ENCODE measurements at regions of chr16 and their contacts with region 1.

Region 1: GRCh38 chr16:67935402-67936123 is 1.1 kb downstream of the PSMB10 start:
- DNase-seq: peak; percentile 71 to 95 (median 91)
- ATAC-seq: peak; percentile 96
- H3K4me3 ChIP-seq: peak overlapping the region; percentile 99
- H3K4me3 Mint-ChIP-seq: peak overlapping the region; percentile 89 to 100 (median 100)
- H3K27ac ChIP-seq: peak overlapping the region; percentile 77
- H3K27ac Mint-ChIP-seq: peak overlapping the region; percentile 87 to 99 (median 99)
- H3K4me1 ChIP-seq: peaks cover 21 to 32% of the 10 kb centered on the region in 2 donors
- H3K4me1 Mint-ChIP-seq: peaks cover 28 to 48% (median 35%) of the 10 kb centered on the region in 7 donors
- H3K27me3 ChIP-seq: no peaks in the 10 kb centered on the region
- H3K27me3 Mint-ChIP-seq: peaks cover 0 to 3% (median 0%) of the 10 kb centered on the region in 5 donors

Region 2: DNA sequence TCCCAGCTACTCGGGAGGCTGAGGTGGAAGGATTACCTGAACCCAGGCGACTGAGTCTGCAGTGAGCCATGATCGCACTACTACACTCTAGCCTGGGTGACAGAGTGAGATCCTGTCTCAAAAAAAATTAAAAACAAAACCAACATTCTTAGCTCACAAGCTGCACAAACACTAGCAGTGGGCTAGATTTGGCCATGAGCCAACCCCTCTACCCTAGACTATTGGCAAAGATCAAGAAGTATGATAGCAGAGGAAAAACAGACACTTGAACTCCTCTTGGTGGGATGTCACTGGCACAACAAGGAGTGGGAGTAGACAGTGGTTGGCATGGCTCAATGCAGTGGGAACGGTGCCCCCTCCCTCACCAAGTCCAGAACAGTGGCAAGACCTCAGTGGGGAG is 426.5 kb before region 1 on chr16:
- CTCF ChIA-PET with region 1: no interaction called
- POLR2A ChIA-PET with region 1: no interaction called
- intact Hi-C with region 1: no loop called
- DNase-seq: peak in 6 of 9 donors; percentile 27 to 56 (median 40)
- ATAC-seq: no peak
- H3K4me3 ChIP-seq: no peak overlapping the region
- H3K4me3 Mint-ChIP-seq: peak overlapping the region in 5 of 10 donors; percentile 32 to 76 (median 56)
- H3K27ac ChIP-seq: no peak overlapping the region
- H3K27ac Mint-ChIP-seq: peak overlapping the region in 7 of 9 donors; percentile 35 to 76 (median 66)
- H3K4me1 ChIP-seq: peaks cover 27 to 34% of the 10 kb centered on the region in 2 donors
- H3K4me1 Mint-ChIP-seq: peaks cover 23 to 54% (median 50%) of the 10 kb centered on the region in 7 donors
- H3K27me3 ChIP-seq: no peaks in the 10 kb centered on the region
- H3K27me3 Mint-ChIP-seq: no peaks in the 10 kb centered on the region

Region 3: GRCh38 chr16:67561824-67562525 is 373.6 kb before region 1 on chr16:
- CTCF ChIA-PET with region 1: no interaction called
- POLR2A ChIA-PET with region 1: interaction called, 3 read pairs
- intact Hi-C with region 1: loop called (anchors 1 to 5 kb)
- DNase-seq: peak; percentile 93 to 98 (median 96)
- ATAC-seq: peak; percentile 86
- H3K4me3 ChIP-seq: peak overlapping the region; percentile 72
- H3K4me3 Mint-ChIP-seq: peak overlapping the region; percentile 85 to 93 (median 90)
- H3K27ac ChIP-seq: peak overlapping the region; percentile 98
- H3K27ac Mint-ChIP-seq: peak overlapping the region; percentile 90 to 99 (median 96)
- H3K4me1 ChIP-seq: peaks cover 30 to 36% of the 10 kb centered on the region in 2 donors
- H3K4me1 Mint-ChIP-seq: peaks cover 28 to 64% (median 46%) of the 10 kb centered on the region in 7 donors
- H3K27me3 ChIP-seq: no peaks in the 10 kb centered on the region
- H3K27me3 Mint-ChIP-seq: no peaks in the 10 kb centered on the region

Region 4: DNA sequence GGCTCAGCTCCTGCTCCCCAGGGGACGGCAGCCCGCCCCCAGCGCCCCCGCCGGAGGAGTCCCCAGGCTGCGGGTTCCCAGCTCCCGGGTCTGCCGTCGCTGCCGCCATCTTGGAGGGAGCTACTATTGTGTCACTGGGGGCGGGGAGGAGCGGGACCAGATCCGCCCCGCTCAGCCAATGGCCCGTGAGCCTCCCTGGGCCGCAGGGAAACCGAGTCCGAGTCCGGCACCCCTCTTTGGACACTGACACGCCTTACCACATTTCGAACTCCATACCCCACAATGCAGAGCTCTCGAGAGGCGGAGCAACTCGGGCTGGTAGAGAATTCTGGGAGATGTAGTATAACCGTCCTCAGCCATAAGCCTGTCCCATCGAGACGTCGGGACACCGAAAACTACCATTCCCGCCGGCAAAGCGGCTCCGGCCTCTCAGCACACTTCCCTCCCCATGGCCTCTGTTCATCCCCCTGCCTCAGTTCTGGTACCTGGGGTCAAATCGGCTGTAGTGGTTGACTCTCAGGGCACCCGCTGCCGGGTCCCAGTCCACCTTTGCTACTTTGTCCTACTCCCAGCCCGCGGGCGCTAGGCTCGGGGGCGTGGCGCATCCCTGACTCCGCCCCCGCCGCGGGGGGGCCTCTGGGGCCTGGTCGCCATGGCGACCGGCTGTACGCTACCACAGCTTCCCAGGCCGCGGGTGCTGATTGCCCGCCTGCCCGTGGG is 129.0 kb before region 1 on chr16 and contains the starts of genes RANBP10 and TSNAXIP1:
- CTCF ChIA-PET with region 1: no interaction called
- POLR2A ChIA-PET with region 1: interaction called, 15 read pairs
- intact Hi-C with region 1: loop called (anchors 1 kb)
- DNase-seq: peak; percentile 91 to 99 (median 97)
- ATAC-seq: peak; percentile 96
- H3K4me3 ChIP-seq: peak within 1 kb of the TSS; percentile 88
- H3K4me3 Mint-ChIP-seq: peak within 1 kb of the TSS; percentile 75 to 97 (median 94)
- H3K27ac ChIP-seq: peak within 1 kb of the TSS; percentile 89
- H3K27ac Mint-ChIP-seq: peak within 1 kb of the TSS; percentile 74 to 97 (median 95)
- H3K4me1 ChIP-seq: peaks cover 29 to 43% of the 10 kb centered on the region in 2 donors
- H3K4me1 Mint-ChIP-seq: peaks cover 13 to 49% (median 42%) of the 10 kb centered on the region in 7 donors
- H3K27me3 ChIP-seq: no peaks in the 10 kb centered on the region
- H3K27me3 Mint-ChIP-seq: peaks cover 0 to under 1% (median 0%) of the 10 kb centered on the region in 5 donors
- total RNA-seq, gene RANBP10: 22.3 to 26.6 (median 24.7) TPM
- total RNA-seq, gene TSNAXIP1: 0.24 to 1.1 (median 0.54) TPM

Region 5: GRCh38 chr16:67883872-67884261 is 51.7 kb before region 1 on chr16:
- CTCF ChIA-PET with region 1: interaction called, 14 read pairs
- POLR2A ChIA-PET with region 1: interaction called, 4 read pairs
- intact Hi-C with region 1: no loop called
- DNase-seq: peak; percentile 62 to 83 (median 74)
- ATAC-seq: peak; percentile 84
- H3K4me3 ChIP-seq: no peak overlapping the region
- H3K4me3 Mint-ChIP-seq: no peak overlapping the region
- H3K27ac ChIP-seq: no peak overlapping the region
- H3K27ac Mint-ChIP-seq: peak overlapping the region in 4 of 9 donors; percentile 19 to 42 (median 36)
- H3K4me1 ChIP-seq: no peaks in the 10 kb centered on the region
- H3K4me1 Mint-ChIP-seq: peaks cover 0 to 6% (median 0%) of the 10 kb centered on the region in 7 donors
- H3K27me3 ChIP-seq: no peaks in the 10 kb centered on the region
- H3K27me3 Mint-ChIP-seq: no peaks in the 10 kb centered on the region

Region 6: DNA sequence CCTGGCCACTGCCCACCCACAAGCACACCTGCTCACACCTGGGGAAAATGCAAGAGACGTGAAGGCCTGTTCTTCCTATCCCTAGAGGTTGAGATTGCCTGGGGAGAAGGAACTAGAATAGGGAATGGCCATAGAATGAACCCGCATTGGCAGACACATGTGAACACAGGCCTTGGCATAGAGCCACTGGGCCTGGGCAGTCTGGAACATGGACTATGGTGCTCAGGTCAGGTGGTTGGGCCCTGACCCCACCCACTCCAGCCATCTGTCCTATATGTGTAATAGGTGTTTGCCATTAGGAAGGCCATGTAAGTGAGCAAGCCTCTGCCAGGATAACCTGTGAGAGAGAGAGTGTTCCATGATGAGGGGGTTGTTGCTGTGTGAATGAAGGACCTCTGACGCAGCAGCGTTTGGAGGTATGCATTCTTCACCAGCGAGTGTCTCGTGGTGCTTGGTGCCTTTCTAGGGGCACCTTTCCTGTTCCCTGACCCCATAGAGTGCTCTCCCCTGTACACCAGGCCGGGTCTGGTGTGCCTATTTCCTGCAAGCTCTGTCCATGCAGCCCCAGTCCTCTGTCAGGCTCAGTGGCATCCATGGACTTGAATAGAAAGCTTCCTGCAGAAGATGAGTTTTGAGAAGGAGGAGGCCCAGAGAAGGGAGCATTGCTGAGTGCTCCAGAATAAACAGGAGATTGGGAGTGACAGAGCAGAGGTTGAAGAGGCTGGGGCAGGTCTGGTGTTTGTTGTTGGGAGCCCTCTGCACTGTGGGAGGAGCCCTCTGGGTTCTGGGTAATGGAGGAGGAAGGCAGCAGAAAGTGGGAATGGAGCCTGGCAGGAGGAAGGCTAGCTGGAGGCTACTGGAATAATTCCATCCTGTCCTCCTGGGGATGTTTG is 19.5 kb before region 1 on chr16:
- CTCF ChIA-PET with region 1: no interaction called
- POLR2A ChIA-PET with region 1: no interaction called
- intact Hi-C with region 1: no loop called
- DNase-seq: no peak
- ATAC-seq: no peak
- H3K4me3 ChIP-seq: no peak overlapping the region
- H3K4me3 Mint-ChIP-seq: no peak overlapping the region
- H3K27ac ChIP-seq: no peak overlapping the region
- H3K27ac Mint-ChIP-seq: peak overlapping the region in 3 of 9 donors; percentile 45 to 72 (median 64)
- H3K4me1 ChIP-seq: no peaks in the 10 kb centered on the region
- H3K4me1 Mint-ChIP-seq: peaks cover 23 to 40% (median 32%) of the 10 kb centered on the region in 7 donors
- H3K27me3 ChIP-seq: no peaks in the 10 kb centered on the region
- H3K27me3 Mint-ChIP-seq: no peaks in the 10 kb centered on the region

Region 7: DNA sequence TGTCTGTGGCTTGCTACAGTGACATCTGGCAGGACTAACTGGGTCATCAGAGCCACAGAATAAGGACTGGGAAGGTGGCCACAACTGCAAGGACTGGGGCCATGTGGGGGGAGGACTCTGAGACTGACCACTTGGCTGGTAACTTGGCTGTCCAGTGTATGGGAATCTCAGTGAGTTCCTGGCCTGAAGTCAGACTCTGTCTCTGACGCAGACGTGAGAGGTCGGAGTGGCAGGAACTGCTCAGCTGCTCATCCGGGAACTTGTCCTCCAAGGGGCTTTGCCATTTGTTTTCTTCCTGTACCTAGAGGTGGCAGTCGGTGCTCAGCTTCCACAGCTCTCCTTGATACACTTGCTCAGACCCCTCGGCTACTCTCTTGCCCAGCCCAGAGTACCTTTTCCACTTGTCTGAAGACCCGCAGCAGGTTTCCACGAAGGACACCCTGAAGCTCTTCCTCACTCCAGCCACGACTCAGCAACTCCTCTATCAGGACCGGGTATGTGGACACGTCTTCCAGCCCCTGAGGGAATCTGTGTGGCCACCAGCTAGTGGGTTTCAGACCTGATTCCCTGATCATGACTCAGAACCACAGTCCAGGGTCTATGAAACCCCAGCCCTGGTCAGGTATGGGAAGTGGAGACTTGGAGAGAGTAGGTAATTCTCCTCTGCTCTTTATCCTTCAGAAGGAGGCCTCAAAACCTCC is 52.0 kb after region 1 on chr16:
- CTCF ChIA-PET with region 1: interaction called, 4 read pairs
- POLR2A ChIA-PET with region 1: interaction called, 29 read pairs
- intact Hi-C with region 1: loop called in 1 of 2 experiments (anchors 1 kb)
- DNase-seq: no peak
- ATAC-seq: no peak
- H3K4me3 ChIP-seq: no peak overlapping the region
- H3K4me3 Mint-ChIP-seq: no peak overlapping the region
- H3K27ac ChIP-seq: peak overlapping the region; percentile 39
- H3K27ac Mint-ChIP-seq: peak overlapping the region in 8 of 9 donors; percentile 70 to 91 (median 85)
- H3K4me1 ChIP-seq: peaks cover 9 to 30% of the 10 kb centered on the region in 2 donors
- H3K4me1 Mint-ChIP-seq: peaks cover 27 to 45% (median 32%) of the 10 kb centered on the region in 7 donors
- H3K27me3 ChIP-seq: no peaks in the 10 kb centered on the region
- H3K27me3 Mint-ChIP-seq: no peaks in the 10 kb centered on the region

Region 8: DNA sequence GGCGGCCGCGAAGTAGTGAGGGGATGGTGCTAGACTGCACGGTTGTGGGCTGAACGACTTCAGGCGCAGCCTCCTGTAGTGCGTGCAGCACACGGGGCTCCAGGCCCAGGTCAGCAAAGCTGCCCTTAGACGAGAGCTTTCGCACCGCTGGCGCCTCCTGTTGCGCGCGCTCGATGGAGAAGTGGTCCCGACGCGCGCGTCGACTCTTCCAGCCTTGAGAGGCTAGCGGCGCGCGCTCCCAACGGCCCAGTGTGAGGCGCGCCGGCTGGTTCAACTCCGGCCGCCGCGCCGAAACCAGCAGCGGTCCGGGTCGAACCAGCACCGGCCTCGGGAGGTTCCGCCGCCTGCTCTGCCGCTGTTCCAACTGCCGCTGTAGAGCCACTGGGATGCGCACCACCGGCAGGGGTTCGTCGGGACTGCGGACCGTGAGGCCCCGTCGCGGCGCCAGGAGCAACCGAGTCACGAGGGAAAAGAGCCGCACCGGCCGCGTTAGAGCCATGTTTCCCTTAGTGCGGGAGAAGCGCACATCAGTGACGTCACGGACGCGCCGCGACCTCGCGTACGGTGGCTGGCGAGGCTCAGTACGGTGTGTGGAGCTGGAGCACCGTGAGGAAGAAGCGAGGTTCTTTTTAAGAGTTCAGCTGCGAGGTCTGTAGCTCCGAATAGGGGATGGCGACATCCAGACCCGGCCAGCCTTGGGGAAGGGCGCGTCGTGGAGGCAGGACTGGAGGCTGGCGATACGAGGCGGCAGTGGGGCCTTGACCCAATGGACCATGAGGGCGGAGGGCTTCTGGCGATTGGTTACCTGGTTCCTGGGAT is 87.3 kb after region 1 on chr16 and contains the starts of genes DDX28 and DUS2:
- CTCF ChIA-PET with region 1: no interaction called
- POLR2A ChIA-PET with region 1: interaction called, 6 read pairs
- intact Hi-C with region 1: loop called in 1 of 2 experiments (anchors 1 kb)
- DNase-seq: peak; percentile 89 to 98 (median 94)
- ATAC-seq: peak; percentile 98
- H3K4me3 ChIP-seq: peak within 1 kb of the TSS; percentile 67
- H3K4me3 Mint-ChIP-seq: peak within 1 kb of the TSS; percentile 88 to 100 (median 98)
- H3K27ac ChIP-seq: peak within 1 kb of the TSS; percentile 92
- H3K27ac Mint-ChIP-seq: peak within 1 kb of the TSS; percentile 94 to 100 (median 96)
- H3K4me1 ChIP-seq: peaks cover 16 to 22% of the 10 kb centered on the region in 2 donors
- H3K4me1 Mint-ChIP-seq: peaks cover 13 to 42% (median 30%) of the 10 kb centered on the region in 7 donors
- H3K27me3 ChIP-seq: no peaks in the 10 kb centered on the region
- H3K27me3 Mint-ChIP-seq: peaks cover 0 to 2% (median 0%) of the 10 kb centered on the region in 5 donors
- total RNA-seq, gene DDX28: 15.5 to 19.9 (median 19.1) TPM
- total RNA-seq, gene DUS2: 13.6 to 25.9 (median 18.3) TPM

Region 9: GRCh38 chr16:68237243-68238028 is 301.9 kb after region 1 on chr16:
- CTCF ChIA-PET with region 1: no interaction called
- POLR2A ChIA-PET with region 1: interaction called, 6 read pairs
- intact Hi-C with region 1: loop called (anchors 1 to 5 kb)
- DNase-seq: peak; percentile 71 to 90 (median 83)
- ATAC-seq: peak; percentile 88
- H3K4me3 ChIP-seq: peak overlapping the region; percentile 91
- H3K4me3 Mint-ChIP-seq: peak overlapping the region; percentile 90 to 99 (median 96)
- H3K27ac ChIP-seq: peak overlapping the region; percentile 67
- H3K27ac Mint-ChIP-seq: peak overlapping the region; percentile 72 to 95 (median 87)
- H3K4me1 ChIP-seq: peaks cover 6 to 10% of the 10 kb centered on the region in 2 donors
- H3K4me1 Mint-ChIP-seq: peaks cover 23 to 45% (median 34%) of the 10 kb centered on the region in 7 donors
- H3K27me3 ChIP-seq: no peaks in the 10 kb centered on the region
- H3K27me3 Mint-ChIP-seq: peaks cover 0 to 13% (median 0%) of the 10 kb centered on the region in 5 donors

Region 10: GRCh38 chr16:68328151-68328859 is 392.7 kb after region 1 on chr16:
- CTCF ChIA-PET with region 1: no interaction called
- POLR2A ChIA-PET with region 1: no interaction called
- intact Hi-C with region 1: no loop called
- DNase-seq: peak; percentile 52 to 81 (median 77)
- ATAC-seq: peak; percentile 99
- H3K4me3 ChIP-seq: no peak overlapping the region
- H3K4me3 Mint-ChIP-seq: no peak overlapping the region
- H3K27ac ChIP-seq: no peak overlapping the region
- H3K27ac Mint-ChIP-seq: peak overlapping the region in 4 of 9 donors; percentile 0 to 57 (median 9)
- H3K4me1 ChIP-seq: peaks cover 0 to 16% of the 10 kb centered on the region in 2 donors
- H3K4me1 Mint-ChIP-seq: peaks cover 16 to 28% (median 19%) of the 10 kb centered on the region in 7 donors
- H3K27me3 ChIP-seq: no peaks in the 10 kb centered on the region
- H3K27me3 Mint-ChIP-seq: no peaks in the 10 kb centered on the region

Region 11: DNA sequence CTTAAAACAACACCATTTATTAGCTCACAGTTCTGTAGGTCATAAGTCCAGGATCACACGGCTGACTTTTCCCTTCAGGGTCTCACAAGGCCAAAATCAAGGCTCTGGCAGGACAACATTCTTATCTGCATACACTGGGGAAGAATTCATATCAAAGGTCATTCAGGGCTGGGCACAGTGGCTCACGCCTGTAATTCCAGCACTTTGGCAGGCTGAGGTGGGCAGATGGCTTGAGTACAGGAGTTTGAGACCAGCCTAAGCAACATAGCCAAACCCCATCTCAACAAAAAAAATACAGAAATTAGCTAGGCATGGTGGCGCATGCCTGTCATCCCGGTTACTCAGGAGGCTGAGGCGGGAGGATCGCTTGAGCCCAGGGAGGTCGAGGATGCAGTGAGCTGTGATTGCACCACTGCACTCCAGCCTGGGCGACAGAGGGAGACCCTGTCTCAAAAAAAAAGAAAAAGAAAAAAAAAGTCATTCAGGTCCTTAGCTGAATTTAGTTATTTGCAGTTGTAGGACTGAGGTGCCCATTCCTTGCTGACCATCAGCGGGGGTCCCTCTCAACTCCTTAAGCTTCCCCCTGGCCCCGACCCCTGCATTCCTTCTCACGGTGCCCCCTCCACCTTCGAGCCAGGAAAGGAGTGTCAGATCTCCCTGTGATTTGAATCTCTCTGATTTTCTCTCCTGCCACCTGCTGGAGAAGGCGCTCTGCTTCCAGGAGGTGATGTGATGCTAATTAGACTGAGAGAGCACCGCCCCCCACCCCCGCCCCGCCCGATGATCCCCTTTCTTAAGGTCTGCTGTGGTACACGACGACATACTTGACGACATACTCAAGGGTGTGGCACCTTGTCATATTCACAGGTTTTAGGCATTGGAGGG is 1923.8 kb after region 1 on chr16:
- CTCF ChIA-PET with region 1: no interaction called
- POLR2A ChIA-PET with region 1: no interaction called
- intact Hi-C with region 1: no loop called
- DNase-seq: no peak
- ATAC-seq: no peak
- H3K4me3 ChIP-seq: no peak overlapping the region
- H3K4me3 Mint-ChIP-seq: no peak overlapping the region
- H3K27ac ChIP-seq: no peak overlapping the region
- H3K27ac Mint-ChIP-seq: peak overlapping the region in 3 of 9 donors; percentile 22 to 85 (median 43)
- H3K4me1 ChIP-seq: no peaks in the 10 kb centered on the region
- H3K4me1 Mint-ChIP-seq: peaks cover 0 to 15% (median 10%) of the 10 kb centered on the region in 7 donors
- H3K27me3 ChIP-seq: no peaks in the 10 kb centered on the region
- H3K27me3 Mint-ChIP-seq: no peaks in the 10 kb centered on the region